ENCODE measurements at regions of chr9 and their contacts with region 1.

Region 1: GRCh38 chr9:33049680-33050361 is 24.7 kb downstream of the DNAJA1 start:
- DNase-seq: no peak
- ATAC-seq: no peak

Region 2: DNA sequence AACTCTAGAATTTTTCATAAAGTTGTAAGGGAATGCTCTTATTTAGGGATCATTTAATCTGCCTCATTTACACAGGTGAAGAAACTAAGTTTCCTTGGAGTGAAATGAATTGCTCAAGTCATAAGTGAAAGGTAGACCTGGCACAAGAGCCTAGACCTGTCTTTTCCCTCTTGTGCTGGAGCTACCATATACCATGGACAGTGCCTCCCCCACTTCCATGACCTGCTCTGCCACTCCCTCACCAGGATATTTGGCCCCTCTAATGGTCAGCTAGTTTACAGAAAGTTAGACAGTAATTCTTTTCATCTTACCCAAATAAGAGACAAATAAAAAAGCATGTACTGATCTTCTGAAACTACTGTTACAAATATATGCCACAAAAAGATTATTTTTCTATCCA is 770.8 kb before region 1 on chr9:
- intact Hi-C with region 1: no loop called
- DNase-seq: no peak
- ATAC-seq: no peak

Region 3: DNA sequence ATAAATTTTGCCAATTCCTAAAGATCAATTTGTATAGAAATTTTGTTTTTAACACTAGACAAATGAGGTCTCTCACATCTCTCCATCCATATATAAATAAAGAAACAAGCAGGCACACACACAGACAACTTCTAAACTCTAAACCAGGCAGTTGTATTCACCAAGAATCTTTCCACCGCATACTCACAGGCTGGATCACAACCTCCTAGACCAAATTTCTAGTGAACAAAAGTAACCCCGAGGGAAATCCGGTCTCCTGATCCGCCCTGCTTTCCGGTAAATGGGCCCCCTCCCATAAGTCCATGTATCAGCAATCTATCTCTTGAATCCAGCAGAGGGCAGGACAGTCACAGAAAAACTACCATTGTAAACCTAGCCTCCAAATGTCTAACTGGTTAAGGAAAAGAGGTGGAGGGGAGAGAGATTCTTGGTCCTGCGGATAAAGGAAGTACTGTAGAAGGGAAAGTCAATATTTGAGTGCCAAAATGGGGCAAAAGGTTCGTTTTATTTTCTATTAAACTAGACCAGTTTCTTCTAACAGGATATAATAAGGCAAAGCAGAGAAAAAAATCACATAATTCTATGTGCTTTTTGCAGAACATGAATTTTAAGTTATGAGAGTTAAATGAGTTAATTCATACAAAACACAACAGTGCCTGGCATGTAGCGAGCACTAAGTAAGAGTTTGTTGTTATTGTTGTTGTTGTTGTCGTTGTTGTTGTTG is 31.5 kb after region 1 on chr9:
- intact Hi-C with region 1: no loop called
- DNase-seq: no peak
- ATAC-seq: peak; percentile 67

Region 4: DNA sequence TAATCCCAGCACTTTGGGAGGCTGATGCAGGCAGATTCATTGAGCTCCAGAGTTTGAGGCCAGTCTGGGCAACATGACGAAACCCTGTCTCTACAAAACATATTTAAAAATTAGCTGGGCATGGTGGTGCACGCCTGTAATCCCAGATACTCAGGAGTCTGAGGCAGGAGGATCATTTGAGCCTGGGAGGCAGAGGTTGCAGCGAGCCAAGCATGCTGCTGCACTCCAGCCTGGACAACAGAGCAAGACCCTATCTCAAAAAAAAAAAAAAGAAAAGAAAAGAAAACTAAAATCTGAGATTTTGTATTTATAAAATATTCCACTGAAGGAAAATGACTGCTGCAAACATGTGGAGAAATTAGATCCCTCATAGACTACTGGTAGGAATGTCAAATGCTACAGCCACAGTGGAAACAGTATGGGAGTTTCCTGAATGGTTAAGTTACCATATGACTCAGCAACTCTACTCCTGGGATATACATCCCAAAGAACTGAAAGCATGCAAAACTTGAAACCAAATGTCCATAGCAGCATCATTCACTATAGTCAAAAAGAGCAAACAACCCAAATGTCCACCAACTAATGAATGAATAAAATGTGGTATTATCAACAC is 892.8 kb after region 1 on chr9:
- intact Hi-C with region 1: loop called (anchors 10 kb)
- DNase-seq: no peak
- ATAC-seq: no peak

Measured in sciatic nerve (tissue), 2 donors.